ENCODE measurements at regions of chr12 and their contacts with region 1.

Region 1: DNA sequence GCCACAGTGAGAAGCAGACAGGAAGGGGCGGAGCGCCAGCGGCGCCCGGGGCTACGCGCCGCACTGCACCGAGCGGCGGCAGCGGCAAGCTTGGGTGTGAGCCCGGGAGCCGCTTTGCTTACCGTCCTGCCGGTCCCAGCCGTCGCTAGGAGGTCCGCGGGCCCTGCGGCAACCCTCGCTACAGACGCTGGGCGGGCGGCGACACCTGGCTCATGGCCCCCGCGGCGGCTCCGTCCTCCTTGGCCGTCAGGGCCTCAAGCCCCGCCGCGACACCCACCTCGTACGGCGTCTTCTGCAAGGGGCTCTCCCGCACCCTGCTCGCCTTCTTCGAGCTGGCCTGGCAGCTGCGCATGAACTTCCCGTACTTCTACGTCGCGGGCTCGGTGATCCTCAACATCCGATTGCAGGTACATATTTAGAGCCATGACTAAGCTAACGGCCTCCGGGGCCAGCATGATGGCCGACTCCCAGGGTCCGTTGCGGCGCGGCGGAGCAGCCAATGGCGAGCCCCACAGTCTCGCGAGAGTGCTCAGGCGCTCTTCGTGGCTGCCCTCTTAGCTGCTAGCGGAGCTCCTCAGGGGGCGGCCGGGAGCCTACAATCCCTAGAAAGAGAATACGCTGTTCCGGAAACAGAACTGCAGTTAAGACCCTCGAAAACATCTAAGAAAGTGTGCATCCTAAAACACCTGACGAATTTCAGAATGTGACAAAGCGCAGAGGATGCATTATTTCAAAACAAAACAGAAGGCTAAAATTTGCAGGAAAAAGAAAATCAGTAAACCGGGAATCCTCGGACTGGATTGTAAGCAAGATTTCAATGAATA is at the start of gene SMIM10L1:
- DNase-seq: peak; percentile 97
- H3K4me3 Mint-ChIP-seq: peak within 1 kb of the TSS; percentile 98
- H3K27ac Mint-ChIP-seq: peak within 1 kb of the TSS; percentile 98
- H3K4me1 Mint-ChIP-seq: peaks cover 49% of the 10 kb centered on the region
- H3K27me3 Mint-ChIP-seq: no peaks in the 10 kb centered on the region
- total RNA-seq, gene SMIM10L1: 9.5 and 10.1 TPM in 2 replicates

Region 2: GRCh38 chr12:10613349-10614055 is 557.9 kb before region 1 on chr12 and contains the start of gene MAGOHB:
- intact Hi-C with region 1: loop called (anchors 2 kb)
- DNase-seq: peak; percentile 100
- H3K4me3 Mint-ChIP-seq: peak within 1 kb of the TSS; percentile 100
- H3K27ac Mint-ChIP-seq: peak within 1 kb of the TSS; percentile 100
- H3K4me1 Mint-ChIP-seq: peaks cover 27% of the 10 kb centered on the region
- H3K27me3 Mint-ChIP-seq: peaks cover 19% of the 10 kb centered on the region
- total RNA-seq, gene MAGOHB: 88.6 and 91.1 TPM in 2 replicates

Region 3: GRCh38 chr12:10740182-10740581 is 431.2 kb before region 1 on chr12:
- intact Hi-C with region 1: no loop called
- DNase-seq: peak; percentile 54
- H3K4me3 Mint-ChIP-seq: no peak overlapping the region
- H3K27ac Mint-ChIP-seq: no peak overlapping the region
- H3K4me1 Mint-ChIP-seq: peaks cover 5% of the 10 kb centered on the region
- H3K27me3 Mint-ChIP-seq: peaks cover 37% of the 10 kb centered on the region

Region 4: DNA sequence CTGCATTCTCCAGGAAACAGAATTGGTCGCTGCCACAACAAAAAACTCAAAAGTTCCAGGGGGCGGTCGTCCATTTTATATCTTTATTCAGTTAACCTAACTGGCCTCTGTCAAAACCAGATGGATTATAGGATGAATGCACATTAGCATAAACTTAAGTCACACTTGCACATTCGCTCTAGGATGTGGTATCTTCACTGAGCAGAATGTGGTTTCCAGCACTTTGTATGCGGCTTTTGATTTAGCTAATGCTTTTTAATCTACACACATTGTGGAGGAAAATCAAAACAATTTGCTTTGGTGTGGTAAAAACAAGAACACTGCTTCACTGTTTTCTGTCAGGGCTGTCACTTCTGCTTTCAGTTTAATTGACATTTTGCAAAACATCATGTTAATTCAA is 189.1 kb before region 1 on chr12:
- intact Hi-C with region 1: loop called (anchors 2 kb)
- DNase-seq: peak; percentile 89
- H3K4me3 Mint-ChIP-seq: peak overlapping the region; percentile 22
- H3K27ac Mint-ChIP-seq: no peak overlapping the region
- H3K4me1 Mint-ChIP-seq: peaks cover 17% of the 10 kb centered on the region
- H3K27me3 Mint-ChIP-seq: peaks cover 62% of the 10 kb centered on the region

Region 5: GRCh38 chr12:11085419-11085818 is 85.9 kb before region 1 on chr12:
- intact Hi-C with region 1: loop called (anchors 5 kb)
- DNase-seq: no peak
- H3K4me3 Mint-ChIP-seq: no peak overlapping the region
- H3K27ac Mint-ChIP-seq: peak overlapping the region; percentile 63
- H3K4me1 Mint-ChIP-seq: peaks cover 5% of the 10 kb centered on the region
- H3K27me3 Mint-ChIP-seq: no peaks in the 10 kb centered on the region

Region 6: DNA sequence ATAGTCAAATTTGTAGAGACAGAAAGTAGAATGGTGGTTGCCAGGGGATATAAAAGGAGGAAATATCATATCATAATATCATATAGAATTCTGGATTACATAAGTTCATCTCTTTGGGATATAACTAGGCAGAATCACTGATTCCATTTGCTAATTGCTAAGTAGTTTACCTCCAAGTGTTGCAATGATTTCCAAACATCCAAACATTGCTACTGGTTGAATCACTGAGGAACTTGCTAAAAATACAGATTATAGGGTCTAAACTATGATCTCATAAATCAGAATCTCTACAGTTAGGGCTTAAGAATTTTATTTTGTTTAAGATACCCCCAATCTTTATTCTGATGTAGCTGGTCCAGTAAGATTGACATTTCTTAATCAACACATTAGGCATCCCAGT is 31.5 kb after region 1 on chr12:
- intact Hi-C with region 1: no loop called
- DNase-seq: no peak
- H3K4me3 Mint-ChIP-seq: no peak overlapping the region
- H3K27ac Mint-ChIP-seq: no peak overlapping the region
- H3K4me1 Mint-ChIP-seq: no peaks in the 10 kb centered on the region
- H3K27me3 Mint-ChIP-seq: peaks cover 5% of the 10 kb centered on the region